ENCODE measurements at regions of chr21 and their contacts with region 1.

Region 1: GRCh38 chr21:32612075-32612998 is at the start of gene CFAP298:
- DNase-seq: peak; percentile 93
- H3K4me3 Mint-ChIP-seq: peak within 1 kb of the TSS; percentile 86
- H3K27ac Mint-ChIP-seq: peak within 1 kb of the TSS; percentile 79
- H3K4me1 Mint-ChIP-seq: peaks cover 10% of the 10 kb centered on the region
- H3K27me3 Mint-ChIP-seq: no peaks in the 10 kb centered on the region
- total RNA-seq, gene CFAP298: 39.4 to 41.8 TPM

Region 2: GRCh38 chr21:32278518-32279376 is 333.6 kb before region 1 on chr21 and contains the start of gene MIS18A:
- CTCF ChIA-PET with region 1: no interaction called
- POLR2A ChIA-PET with region 1: no interaction called
- intact Hi-C with region 1: loop called (anchors 10 kb)
- DNase-seq: peak; percentile 99
- H3K4me3 Mint-ChIP-seq: peak within 1 kb of the TSS; percentile 99
- H3K27ac Mint-ChIP-seq: peak within 1 kb of the TSS; percentile 88
- H3K4me1 Mint-ChIP-seq: peaks cover 11% of the 10 kb centered on the region
- H3K27me3 Mint-ChIP-seq: no peaks in the 10 kb centered on the region
- total RNA-seq, gene MIS18A: 34.2 to 36.1 TPM

Region 3: DNA sequence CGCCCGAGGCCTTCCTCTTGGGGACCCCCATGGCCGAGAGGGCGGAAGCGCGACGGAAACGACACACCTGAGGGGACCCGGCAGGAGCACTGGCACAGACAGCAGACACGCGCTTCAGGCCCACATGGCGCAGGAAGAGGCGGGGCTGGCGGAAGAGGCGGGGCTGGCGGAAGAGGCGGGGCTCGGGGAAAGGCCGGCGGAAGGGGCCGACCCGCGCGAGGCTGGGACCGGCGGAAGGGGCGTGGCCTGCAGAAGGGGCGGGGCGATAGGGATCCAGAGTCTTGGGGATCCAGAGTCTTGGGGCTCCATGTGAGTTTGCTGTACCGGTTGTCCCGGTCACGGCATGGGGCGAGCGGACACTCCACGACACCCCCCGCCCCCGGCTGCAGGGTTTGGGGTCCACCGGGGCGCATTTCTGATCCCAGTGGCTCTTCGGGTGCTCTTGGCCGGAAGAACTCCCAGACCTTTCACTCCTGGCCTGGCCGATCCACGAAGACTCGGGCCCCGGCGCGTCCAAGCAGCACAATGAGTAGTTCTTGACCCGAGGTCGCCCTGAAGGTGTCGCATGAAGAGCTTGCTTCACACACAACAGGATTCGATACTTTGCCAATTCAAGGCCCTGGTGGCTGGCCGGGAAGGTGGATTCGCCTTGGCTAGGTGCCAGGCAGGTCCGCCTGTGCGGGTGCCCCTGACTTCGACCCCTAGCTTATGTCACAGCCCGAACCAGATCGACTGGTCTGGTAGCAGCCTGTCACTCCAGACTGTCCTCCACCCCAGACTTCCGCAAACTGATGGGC is 219.3 kb before region 1 on chr21 and contains the start of gene URB1:
- CTCF ChIA-PET with region 1: no interaction called
- POLR2A ChIA-PET with region 1: interaction called, 6 read pairs
- intact Hi-C with region 1: loop called (anchors 1 kb)
- DNase-seq: peak; percentile 96
- H3K4me3 Mint-ChIP-seq: peak within 1 kb of the TSS; percentile 80
- H3K27ac Mint-ChIP-seq: peak within 1 kb of the TSS; percentile 51
- H3K4me1 Mint-ChIP-seq: peaks cover 43% of the 10 kb centered on the region
- H3K27me3 Mint-ChIP-seq: peaks cover 2% of the 10 kb centered on the region
- total RNA-seq, gene URB1: 21.5 to 23.4 TPM

Region 4: DNA sequence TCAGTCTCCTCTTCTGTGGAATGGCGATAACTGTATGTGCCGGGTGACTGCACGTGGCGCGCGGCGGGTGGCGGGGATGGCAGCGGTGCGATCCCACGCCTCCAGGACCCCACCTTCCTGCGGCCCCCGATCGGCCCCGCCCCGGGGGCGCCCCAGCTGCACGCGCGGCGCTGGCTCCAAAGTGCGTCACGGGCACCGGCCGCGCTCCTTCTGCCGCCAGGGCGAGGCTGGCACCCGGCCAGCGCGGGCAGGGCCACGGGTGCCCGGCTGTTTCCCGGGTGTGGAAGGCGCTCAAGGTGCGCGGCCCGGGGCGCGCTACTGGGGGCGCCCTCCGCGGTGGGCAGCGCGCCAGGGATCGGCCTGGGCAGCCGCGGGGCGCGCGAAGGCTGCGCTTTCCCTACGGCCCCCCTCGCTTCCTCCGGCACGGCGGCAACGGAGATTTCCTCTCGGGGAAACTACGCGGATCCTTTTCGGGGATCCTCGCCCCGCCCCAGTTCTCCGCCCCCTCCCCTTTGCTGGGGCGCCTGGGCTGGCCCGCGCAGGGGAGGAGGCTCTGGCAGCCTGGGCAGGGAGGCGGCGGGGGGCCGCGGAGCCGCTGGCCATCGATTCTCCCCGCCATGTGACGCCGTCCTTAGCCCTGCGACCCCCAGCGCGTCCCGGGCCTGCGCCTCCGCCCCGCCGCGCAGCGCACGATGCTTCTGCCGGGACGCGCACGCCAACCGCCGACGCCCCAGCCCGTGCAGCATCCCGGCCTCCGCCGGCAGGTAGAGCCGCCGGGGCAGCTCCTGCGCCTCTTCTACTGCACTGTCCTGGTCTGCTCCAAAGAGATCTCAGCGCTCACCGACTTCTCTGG is 199.9 kb before region 1 on chr21 and contains the start of gene EVA1C:
- CTCF ChIA-PET with region 1: no interaction called
- POLR2A ChIA-PET with region 1: interaction called, 6 read pairs
- intact Hi-C with region 1: loop called (anchors 2 kb)
- DNase-seq: peak; percentile 76
- H3K4me3 Mint-ChIP-seq: peak within 1 kb of the TSS; percentile 91
- H3K27ac Mint-ChIP-seq: peak within 1 kb of the TSS; percentile 89
- H3K4me1 Mint-ChIP-seq: peaks cover 33% of the 10 kb centered on the region
- H3K27me3 Mint-ChIP-seq: no peaks in the 10 kb centered on the region
- total RNA-seq, gene EVA1C: 9.3 to 9.6 TPM

Region 5: DNA sequence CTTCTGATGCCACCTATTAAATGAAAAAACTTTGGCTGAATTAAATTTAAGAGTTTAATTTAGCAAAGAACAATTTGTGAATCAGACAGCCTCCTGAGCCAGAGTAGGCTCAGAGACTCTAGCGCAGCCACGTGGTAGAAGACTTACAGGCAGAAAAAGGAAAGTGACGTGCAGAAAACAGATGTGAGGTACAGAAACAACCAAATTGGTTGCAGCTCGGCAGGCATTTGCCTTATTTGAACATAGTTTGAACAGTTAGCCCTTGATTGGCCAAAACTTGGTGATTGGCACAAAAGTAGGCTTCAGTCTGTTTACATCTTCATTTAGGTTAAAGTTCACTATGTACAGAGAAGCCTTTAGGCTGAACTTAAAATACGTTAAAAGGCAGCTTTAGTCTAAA is 49.9 kb before region 1 on chr21:
- CTCF ChIA-PET with region 1: no interaction called
- POLR2A ChIA-PET with region 1: no interaction called
- intact Hi-C with region 1: no loop called
- DNase-seq: no peak
- H3K4me3 Mint-ChIP-seq: no peak overlapping the region
- H3K27ac Mint-ChIP-seq: no peak overlapping the region
- H3K4me1 Mint-ChIP-seq: no peaks in the 10 kb centered on the region
- H3K27me3 Mint-ChIP-seq: no peaks in the 10 kb centered on the region

Region 6: GRCh38 chr21:32574946-32575925 is 37.1 kb before region 1 on chr21:
- CTCF ChIA-PET with region 1: no interaction called
- POLR2A ChIA-PET with region 1: no interaction called
- intact Hi-C with region 1: no loop called
- DNase-seq: no peak
- H3K4me3 Mint-ChIP-seq: no peak overlapping the region
- H3K27ac Mint-ChIP-seq: no peak overlapping the region
- H3K4me1 Mint-ChIP-seq: peaks cover 3% of the 10 kb centered on the region
- H3K27me3 Mint-ChIP-seq: no peaks in the 10 kb centered on the region

Region 7: GRCh38 chr21:32597205-32597604 is 15.1 kb before region 1 on chr21:
- CTCF ChIA-PET with region 1: interaction called, 24 read pairs
- POLR2A ChIA-PET with region 1: no interaction called
- intact Hi-C with region 1: no loop called
- DNase-seq: no peak
- H3K4me3 Mint-ChIP-seq: no peak overlapping the region
- H3K27ac Mint-ChIP-seq: no peak overlapping the region
- H3K4me1 Mint-ChIP-seq: peaks cover 2% of the 10 kb centered on the region
- H3K27me3 Mint-ChIP-seq: no peaks in the 10 kb centered on the region

Region 8: DNA sequence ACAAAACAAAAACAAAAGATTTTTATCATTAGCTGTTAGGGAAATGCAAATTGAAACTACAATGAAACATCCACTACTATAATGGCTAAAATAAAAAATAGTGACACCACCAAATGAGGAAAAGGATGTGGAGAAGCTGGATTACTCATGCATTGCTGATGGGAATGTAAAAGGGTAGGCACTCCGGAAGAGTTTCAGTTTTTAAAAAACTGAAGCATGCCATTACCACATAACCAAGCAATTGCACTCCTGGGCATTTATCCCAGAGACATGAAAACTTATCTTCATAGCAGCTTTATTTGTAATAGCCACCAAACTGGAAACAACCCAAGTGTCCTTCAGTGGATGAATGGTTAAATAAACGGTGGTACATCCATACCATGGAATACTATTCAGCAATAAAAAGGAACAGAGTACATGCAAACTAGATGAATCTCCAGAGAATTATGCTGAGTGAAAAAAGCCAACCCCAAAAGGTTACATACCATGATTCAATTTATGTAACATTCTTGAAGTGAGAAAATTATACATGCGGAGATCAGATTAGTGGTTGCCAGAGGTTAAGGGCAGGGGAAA is 14.4 kb after region 1 on chr21:
- CTCF ChIA-PET with region 1: no interaction called
- POLR2A ChIA-PET with region 1: no interaction called
- intact Hi-C with region 1: no loop called
- DNase-seq: no peak
- H3K4me3 Mint-ChIP-seq: no peak overlapping the region
- H3K27ac Mint-ChIP-seq: no peak overlapping the region
- H3K4me1 Mint-ChIP-seq: peaks cover 3% of the 10 kb centered on the region
- H3K27me3 Mint-ChIP-seq: peaks cover 4% of the 10 kb centered on the region

Region 9: GRCh38 chr21:32727687-32728455 is 115.5 kb after region 1 on chr21 and contains the start of gene SYNJ1:
- CTCF ChIA-PET with region 1: no interaction called
- POLR2A ChIA-PET with region 1: interaction called, 4 read pairs
- intact Hi-C with region 1: loop called (anchors 10 kb)
- DNase-seq: peak; percentile 96
- H3K4me3 Mint-ChIP-seq: peak within 1 kb of the TSS; percentile 92
- H3K27ac Mint-ChIP-seq: peak within 1 kb of the TSS; percentile 92
- H3K4me1 Mint-ChIP-seq: peaks cover 51% of the 10 kb centered on the region
- H3K27me3 Mint-ChIP-seq: no peaks in the 10 kb centered on the region
- total RNA-seq, gene SYNJ1: 13.3 to 14.2 TPM

Region 10: GRCh38 chr21:32753818-32754610 is 141.7 kb after region 1 on chr21:
- CTCF ChIA-PET with region 1: no interaction called
- POLR2A ChIA-PET with region 1: no interaction called
- intact Hi-C with region 1: no loop called
- DNase-seq: no peak
- H3K4me3 Mint-ChIP-seq: no peak overlapping the region
- H3K27ac Mint-ChIP-seq: no peak overlapping the region
- H3K4me1 Mint-ChIP-seq: peaks cover 27% of the 10 kb centered on the region
- H3K27me3 Mint-ChIP-seq: no peaks in the 10 kb centered on the region

Measured in activated CD4-positive, alpha-beta memory T cell treated with anti-CD3 and anti-CD28 coated beads for 36 hours (primary cell).